Endothelial cell of umbilical vein (primary cell): ENCODE measurements at regions of chr15 and their contacts with region 1.

Region 1: DNA sequence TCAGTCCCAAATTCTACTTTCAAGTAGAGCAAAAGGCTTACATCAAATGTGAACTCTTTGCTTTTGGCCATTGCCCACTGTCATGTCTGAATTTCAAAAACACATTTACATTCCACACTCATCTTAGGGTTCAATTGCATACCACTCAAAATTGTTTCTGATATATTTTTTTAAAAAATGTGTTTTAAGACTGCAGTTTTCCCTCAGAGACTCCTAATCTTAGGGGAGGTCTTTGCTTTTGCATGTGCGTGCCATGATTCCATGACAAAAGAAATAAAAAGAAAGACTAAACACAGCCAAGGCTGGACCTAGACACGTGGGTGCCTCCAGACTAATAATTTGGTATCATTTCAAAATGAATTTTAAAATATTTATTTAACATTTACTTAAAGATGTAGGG is 396.8 kb upstream of the RASGRP1 start:
- DNase-seq: no peak
- H3K4me3 ChIP-seq: no peak overlapping the region
- H3K27ac ChIP-seq: no peak overlapping the region
- H3K4me1 ChIP-seq: peaks cover 7% of the 10 kb centered on the region
- H3K27me3 ChIP-seq: no peaks in the 10 kb centered on the region
- CTCF ChIP-seq: no peak
- POLR2A ChIP-seq: no peak

Region 2: DNA sequence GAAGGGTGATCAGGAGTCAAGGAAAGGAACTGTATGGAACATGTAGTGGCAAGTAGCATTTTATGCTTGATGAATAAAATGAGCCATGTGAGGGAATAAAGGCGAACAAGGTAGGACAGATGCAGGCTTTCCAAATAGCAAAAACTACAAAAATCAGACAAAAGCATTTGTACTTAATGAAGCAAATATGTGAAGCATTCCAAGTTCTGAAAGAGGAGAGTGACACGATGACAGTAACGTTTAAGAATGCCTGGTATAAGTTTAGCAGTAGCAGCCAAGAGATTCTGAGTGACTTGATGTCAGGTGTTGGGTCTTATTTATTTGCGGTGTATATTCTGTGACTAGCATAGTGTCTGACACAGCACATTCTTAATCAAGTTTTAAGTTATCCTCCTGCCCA is 11.4 kb after region 1 on chr15:
- CTCF ChIA-PET with region 1: interaction called, 12 read pairs
- POLR2A ChIA-PET with region 1: no interaction called
- dilution Hi-C with region 1: no loop called
- intact Hi-C with region 1: no loop called
- DNase-seq: no peak
- H3K4me3 ChIP-seq: no peak overlapping the region
- H3K27ac ChIP-seq: no peak overlapping the region
- H3K4me1 ChIP-seq: no peaks in the 10 kb centered on the region
- H3K27me3 ChIP-seq: no peaks in the 10 kb centered on the region
- CTCF ChIP-seq: no peak
- POLR2A ChIP-seq: no peak